ENCODE measurements at regions of chr7 and their contacts with region 1.

Region 1: GRCh38 chr7:148503875-148504487 is 86.6 kb upstream of the C7orf33 start:
- DNase-seq: peak; percentile 18
- ATAC-seq: no peak
- H3K4me3 ChIP-seq: no peak overlapping the region
- H3K27ac ChIP-seq: no peak overlapping the region
- H3K4me1 ChIP-seq: no peaks in the 10 kb centered on the region; the same call in 1 of the 2 replicates
- H3K27me3 ChIP-seq: peaks cover 16% of the 10 kb centered on the region
- CTCF ChIP-seq: peak; percentile 74; the same call in 1 of the 2 replicates

Region 2: GRCh38 chr7:148877517-148877916 is 373.5 kb after region 1 on chr7:
- CTCF ChIA-PET with region 1: no interaction called
- POLR2A ChIA-PET with region 1: interaction called, 15 read pairs
- in situ Hi-C with region 1: no loop called
- intact Hi-C with region 1: no loop called
- DNase-seq: no peak
- ATAC-seq: no peak
- H3K4me3 ChIP-seq: no peak overlapping the region
- H3K27ac ChIP-seq: no peak overlapping the region
- H3K4me1 ChIP-seq: peaks cover 23% of the 10 kb centered on the region; the same call in 1 of the 2 replicates
- H3K27me3 ChIP-seq: no peaks in the 10 kb centered on the region
- CTCF ChIP-seq: no peak